GM18951 (cell line): ENCODE measurements at regions of chr1 and their contacts with region 1.

Region 1: GRCh38 chr1:220281159-220281574 is 8.9 kb upstream of the RAB3GAP2 start:
- POLR2A ChIP-seq: no peak

Region 2: DNA sequence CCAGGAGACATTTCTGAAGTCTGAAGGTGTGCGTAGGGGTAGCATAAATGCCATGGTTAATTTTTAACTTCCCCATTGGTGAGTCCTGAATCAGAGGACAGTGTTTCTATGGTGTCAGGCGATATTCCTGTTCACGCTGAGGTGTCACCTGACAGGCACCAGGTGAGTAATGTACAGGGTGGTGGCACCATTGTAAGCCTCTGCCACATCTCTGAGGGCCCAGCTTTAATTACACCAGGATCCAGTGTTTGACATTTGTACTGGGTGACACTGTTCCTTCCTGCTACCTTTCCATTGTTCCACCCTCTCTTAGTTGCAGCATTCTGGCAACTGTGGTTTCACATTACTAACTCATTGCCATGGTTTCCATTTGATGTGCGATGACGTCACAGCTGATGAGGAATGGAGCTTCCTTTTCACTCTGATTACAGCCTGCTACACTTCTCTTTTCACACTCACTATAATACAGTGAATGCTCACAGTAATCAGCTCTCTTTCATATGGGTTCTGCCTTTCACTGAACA is 206.2 kb after region 1 on chr1:
- in situ Hi-C with region 1: no loop called
- POLR2A ChIP-seq: no peak

Region 3: GRCh38 chr1:220770245-220770918 is 489.2 kb after region 1 on chr1:
- in situ Hi-C with region 1: loop called (anchors 25 kb)
- POLR2A ChIP-seq: no peak